Aorta (tissue), 5 donors: ENCODE measurements at regions of chr10 and their contacts with region 1.

Region 1: DNA sequence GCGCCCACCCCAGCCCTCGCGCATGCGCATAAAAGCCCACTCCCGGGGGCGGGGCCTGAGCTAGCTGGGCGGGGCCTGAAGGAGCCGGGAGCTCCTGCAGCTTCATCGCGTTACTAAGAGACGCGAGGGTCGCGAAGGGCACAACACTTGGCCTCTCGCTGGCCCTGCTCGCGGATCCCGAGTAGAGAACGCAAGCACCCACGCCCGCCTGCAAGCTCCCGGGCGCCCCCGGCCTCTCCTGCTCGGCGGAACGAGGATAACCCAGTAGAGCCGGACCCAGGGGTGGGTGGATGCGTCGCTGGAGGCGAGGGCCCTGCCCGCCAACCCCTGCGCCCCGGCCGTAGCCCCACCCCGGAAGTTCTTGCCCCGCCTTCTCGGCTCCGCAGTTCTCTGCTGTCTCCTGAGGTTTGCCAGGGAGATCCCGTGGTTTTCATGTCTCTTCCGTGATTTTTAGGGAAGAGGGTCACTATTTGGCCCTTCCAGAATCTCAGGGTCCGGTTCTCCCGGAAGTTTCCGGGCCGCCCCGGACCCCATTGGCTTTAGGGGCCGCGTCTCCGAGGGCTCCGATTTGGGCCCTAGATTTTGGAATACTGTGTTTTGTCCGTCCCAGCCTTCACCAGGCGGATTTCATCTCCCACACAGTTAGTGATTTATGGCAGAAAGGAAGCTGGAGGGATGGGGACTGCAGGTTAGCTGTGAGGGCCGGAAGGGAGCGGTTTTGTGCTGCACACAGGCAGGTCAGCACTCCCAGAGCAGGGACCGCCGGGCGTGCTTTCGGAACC is at the start of gene MEIG1:
- DNase-seq: peak; percentile 95 to 97
- ATAC-seq: peak; percentile 98
- H3K4me3 ChIP-seq: peak within 1 kb of the TSS; percentile 40 to 72
- H3K27ac ChIP-seq: peak within 1 kb of the TSS; percentile 64 to 84
- H3K4me1 ChIP-seq: no peaks in the 10 kb centered on the region
- H3K27me3 ChIP-seq: no peaks in the 10 kb centered on the region
- total RNA-seq, gene MEIG1: not detected

Region 2: DNA sequence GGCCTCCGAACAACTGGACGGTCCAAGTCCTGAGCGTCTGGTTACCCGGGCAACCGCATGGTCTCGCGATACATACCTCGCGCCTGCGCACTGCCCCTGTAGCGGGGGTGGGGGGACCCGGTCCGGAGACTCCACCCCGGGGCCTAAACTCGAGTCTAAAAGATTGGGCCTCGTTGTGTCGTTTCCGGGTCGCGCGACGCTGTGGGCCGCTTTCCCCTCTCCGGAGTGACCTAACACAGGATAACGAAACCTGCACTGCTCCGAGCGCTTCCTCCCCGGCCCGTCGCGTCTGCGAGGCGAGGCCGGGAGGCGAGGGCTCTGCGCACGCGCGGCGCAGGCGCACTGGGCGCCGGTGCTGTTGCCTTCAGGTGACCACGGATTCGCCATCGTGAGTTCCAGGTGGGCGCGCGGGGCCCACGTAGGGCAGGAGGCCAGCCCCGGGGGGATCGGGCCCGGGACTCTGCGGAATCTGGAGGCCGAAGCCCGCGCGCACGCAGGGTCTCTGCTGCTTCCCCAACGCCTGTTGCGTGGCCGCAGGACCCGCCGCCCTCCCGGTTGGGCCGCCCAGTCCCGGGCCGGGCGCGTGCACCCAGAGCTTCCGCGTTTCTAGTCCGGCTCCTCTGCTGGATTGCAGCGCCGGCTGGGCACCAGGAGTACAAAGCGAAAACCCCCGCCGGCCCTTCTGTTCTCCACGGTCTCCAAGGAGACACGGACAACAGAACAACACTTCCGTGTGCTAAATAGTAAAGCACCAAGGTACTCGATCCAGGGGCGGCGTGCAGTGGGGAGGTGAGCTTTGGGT is 137.7 kb after region 1 on chr10 and contains the start of gene RPP38:
- intact Hi-C with region 1: loop called (anchors 5 to 10 kb)
- DNase-seq: peak; percentile 98 to 99
- ATAC-seq: peak; percentile 99
- H3K4me3 ChIP-seq: peak within 1 kb of the TSS; percentile 38 to 75
- H3K27ac ChIP-seq: peak within 1 kb of the TSS in 1 of 2 donors; percentile 60
- H3K4me1 ChIP-seq: no peaks in the 10 kb centered on the region
- H3K27me3 ChIP-seq: no peaks in the 10 kb centered on the region
- total RNA-seq, gene RPP38: 8.2 to 9.0 TPM

Region 3: DNA sequence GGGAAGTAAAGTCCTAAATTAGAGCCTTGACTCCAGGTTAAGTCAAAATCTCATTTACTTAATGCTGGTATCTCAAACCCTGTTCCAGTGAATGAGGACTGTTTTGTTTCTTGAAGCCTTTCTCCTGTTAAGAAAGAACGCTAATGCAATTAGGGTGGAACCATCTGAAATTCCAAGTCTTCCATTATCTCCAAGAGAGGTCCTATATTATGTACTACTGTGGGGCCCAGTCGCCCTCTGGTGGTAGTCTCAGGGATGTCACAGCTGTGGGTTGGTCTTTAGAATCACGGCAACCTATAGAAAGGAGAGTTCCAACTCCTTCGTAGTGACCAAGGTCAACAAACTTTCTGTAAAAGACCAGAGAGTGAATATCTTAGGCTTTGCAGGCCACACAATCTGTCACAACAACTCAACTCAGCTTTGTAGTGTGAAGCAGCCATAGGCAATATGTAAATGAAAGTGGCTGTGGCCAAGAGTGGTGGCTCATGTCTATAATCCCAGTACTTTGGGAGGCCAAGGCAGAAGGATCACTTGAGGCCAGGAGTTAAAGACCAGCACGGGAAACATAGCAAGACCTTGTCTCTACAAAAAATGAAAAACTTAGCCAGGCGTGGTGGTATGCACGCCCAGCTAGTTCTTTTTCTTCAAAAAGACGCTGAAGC is 147.0 kb after region 1 on chr10:
- intact Hi-C with region 1: loop called in 1 of 2 experiments (anchors 10 kb)
- DNase-seq: peak; percentile 71 to 87
- ATAC-seq: peak; percentile 87
- H3K4me3 ChIP-seq: no peak overlapping the region
- H3K27ac ChIP-seq: peak overlapping the region in 1 of 2 donors; percentile 17
- H3K4me1 ChIP-seq: peaks cover 0 to 3% of the 10 kb centered on the region in 2 donors
- H3K27me3 ChIP-seq: no peaks in the 10 kb centered on the region

Region 4: DNA sequence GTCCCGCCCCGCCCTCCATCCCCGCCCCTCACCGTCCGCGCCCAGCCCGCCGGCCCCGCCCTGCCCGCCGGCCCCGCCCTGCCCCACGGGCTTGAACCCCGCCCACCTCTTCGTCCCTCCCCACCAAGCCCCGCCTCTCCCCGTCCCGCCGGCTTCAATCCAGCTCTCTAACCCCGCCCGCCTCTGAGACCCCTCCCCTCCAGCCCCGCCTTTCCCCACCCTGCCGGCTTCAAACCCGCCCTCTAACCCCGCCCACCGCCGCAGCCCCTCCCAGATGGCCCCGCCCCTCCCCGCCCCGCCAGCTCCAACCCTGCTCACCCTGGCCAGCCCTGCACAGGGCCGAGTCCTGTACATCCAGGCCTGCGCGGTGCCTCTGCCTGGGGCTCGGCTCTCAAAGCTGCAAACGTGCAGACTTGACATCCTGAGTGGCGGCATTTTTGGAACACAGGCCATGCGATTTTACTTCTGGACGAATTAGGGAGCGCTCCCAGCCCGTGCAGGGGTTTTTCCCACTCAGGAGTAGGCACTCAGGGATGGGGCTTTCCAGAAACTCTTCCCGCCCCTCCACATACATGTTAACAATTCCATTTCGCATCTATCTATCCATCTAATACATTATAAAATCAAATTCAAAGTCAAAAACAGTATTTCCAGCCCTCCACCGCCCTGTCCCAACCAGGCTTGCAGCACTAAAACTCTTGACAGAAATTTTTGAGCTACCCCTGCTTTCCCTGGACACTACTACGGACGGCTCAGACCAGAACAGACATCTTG is 209.5 kb after region 1 on chr10:
- intact Hi-C with region 1: loop called in 1 of 2 experiments (anchors 1 kb)
- DNase-seq: peak; percentile 97 to 99
- ATAC-seq: peak; percentile 97
- H3K4me3 ChIP-seq: no peak overlapping the region
- H3K27ac ChIP-seq: no peak overlapping the region
- H3K4me1 ChIP-seq: peaks cover 0 to 3% of the 10 kb centered on the region in 2 donors
- H3K27me3 ChIP-seq: no peaks in the 10 kb centered on the region